ENCODE measurements at regions of chr15 and their contacts with region 1.

Region 1: DNA sequence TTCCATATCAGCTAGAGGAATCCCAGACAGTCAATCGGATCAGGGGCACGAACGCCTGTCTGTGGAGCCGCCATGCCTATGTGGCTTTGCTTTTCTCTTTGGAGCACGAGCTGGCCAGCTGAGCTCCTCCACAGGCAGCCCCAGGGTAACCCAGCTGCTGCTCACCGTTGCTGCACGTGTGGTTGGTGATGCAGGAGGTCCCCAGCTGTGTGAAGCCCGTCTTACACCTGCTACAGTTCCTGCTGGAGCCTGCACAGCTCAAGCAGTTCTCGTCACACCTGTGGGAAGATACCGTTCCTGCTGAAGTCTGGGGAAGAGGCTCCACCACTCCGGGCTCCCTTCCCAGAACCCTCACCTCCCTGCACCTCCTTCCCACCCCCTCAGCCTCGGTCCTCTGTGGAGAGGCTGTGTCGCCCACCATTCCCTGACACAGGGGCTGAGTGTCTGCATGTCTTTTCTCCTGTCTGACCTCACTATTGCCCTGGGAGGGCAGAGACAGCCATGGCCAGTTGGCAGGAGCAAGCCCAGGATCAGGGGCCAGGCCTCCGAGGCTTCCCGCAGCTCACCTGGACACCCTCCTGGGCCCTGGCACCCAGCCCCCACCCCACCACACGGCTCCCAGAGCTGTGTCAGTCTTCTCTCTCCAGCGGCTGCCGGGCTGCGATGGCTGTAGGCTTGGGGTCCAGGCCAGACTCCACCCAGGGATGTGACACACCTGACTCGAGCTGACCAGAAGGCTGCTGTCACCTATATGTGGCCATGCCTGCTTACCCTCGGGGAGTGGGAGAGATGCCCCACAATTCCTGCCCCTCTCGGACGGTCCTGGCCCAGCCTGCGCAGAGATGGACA is 12.2 kb upstream of the SNRPA1 start:
- DNase-seq: no peak
- H3K4me3 ChIP-seq: no peak overlapping the region
- H3K27ac ChIP-seq: no peak overlapping the region
- H3K4me1 ChIP-seq: no peaks in the 10 kb centered on the region
- H3K27me3 ChIP-seq: no peaks in the 10 kb centered on the region
- CTCF ChIP-seq: no peak

Region 2: DNA sequence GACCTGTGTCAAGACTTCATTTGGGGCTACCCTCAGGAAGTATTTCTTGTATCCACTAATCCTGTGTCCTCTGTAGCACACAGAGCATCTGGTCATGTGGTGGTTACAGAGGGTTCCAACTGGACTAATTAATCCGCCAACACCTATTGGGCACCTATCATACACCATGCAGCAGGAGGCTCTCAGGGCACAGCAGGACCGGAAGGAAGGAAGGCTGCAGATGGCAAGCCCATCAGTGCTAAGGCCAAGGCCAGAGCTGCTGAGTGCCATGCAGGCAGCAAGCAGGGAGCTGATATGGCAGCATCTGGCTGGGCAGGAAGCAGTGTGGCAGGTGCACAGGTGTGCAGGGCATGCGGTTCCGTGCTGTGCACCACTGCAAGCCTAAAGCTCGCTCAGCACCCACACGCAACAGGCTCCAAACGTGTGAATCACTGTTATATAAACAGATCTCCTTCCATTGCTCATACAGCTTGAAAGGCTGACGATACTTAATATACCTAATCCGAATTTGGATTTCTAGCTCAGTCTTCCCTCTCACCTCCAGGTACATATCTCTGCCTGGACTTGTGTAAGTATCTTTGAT is 52.2 kb after region 1 on chr15:
- intact Hi-C with region 1: no loop called
- DNase-seq: no peak
- H3K4me3 ChIP-seq: no peak overlapping the region
- H3K27ac ChIP-seq: no peak overlapping the region
- H3K4me1 ChIP-seq: no peaks in the 10 kb centered on the region
- H3K27me3 ChIP-seq: no peaks in the 10 kb centered on the region
- CTCF ChIP-seq: no peak

Region 3: GRCh38 chr15:101489633-101490407 is 182.5 kb after region 1 on chr15 and contains the start of gene PCSK6:
- intact Hi-C with region 1: loop called (anchors 5 kb)
- DNase-seq: peak; percentile 52
- H3K4me3 ChIP-seq: peak within 1 kb of the TSS; percentile 47
- H3K27ac ChIP-seq: no peak within 1 kb of the TSS
- H3K4me1 ChIP-seq: no peaks in the 10 kb centered on the region
- H3K27me3 ChIP-seq: no peaks in the 10 kb centered on the region
- CTCF ChIP-seq: no peak
- total RNA-seq, gene PCSK6: 29.9 to 39.5 TPM

Region 4: DNA sequence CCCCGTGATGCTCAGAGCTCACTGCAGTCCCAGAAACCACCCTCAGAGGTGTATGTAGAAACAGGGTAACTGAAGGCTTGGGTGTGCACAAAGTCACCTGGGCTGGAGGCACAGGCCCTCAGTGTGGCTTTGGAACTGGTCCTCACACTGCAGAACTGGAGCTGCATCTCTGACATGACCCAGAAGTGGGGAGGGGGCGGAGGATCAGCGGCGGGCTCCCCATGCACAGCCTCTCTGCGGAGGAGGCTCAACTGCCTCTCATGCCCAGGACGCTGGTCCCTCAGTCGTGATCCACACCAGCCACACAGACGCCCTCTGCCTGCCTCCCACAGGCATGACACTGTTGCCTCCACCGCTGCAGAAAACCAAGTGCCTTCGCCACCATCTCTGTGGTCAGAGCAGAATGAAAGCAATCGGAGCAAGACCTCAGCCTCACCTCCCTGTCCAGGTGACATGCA is 271.2 kb after region 1 on chr15:
- intact Hi-C with region 1: loop called (anchors 5 kb)
- DNase-seq: peak; percentile 63
- H3K4me3 ChIP-seq: no peak overlapping the region
- H3K27ac ChIP-seq: no peak overlapping the region
- H3K4me1 ChIP-seq: no peaks in the 10 kb centered on the region
- H3K27me3 ChIP-seq: no peaks in the 10 kb centered on the region
- CTCF ChIP-seq: peak; percentile 58

Region 5: DNA sequence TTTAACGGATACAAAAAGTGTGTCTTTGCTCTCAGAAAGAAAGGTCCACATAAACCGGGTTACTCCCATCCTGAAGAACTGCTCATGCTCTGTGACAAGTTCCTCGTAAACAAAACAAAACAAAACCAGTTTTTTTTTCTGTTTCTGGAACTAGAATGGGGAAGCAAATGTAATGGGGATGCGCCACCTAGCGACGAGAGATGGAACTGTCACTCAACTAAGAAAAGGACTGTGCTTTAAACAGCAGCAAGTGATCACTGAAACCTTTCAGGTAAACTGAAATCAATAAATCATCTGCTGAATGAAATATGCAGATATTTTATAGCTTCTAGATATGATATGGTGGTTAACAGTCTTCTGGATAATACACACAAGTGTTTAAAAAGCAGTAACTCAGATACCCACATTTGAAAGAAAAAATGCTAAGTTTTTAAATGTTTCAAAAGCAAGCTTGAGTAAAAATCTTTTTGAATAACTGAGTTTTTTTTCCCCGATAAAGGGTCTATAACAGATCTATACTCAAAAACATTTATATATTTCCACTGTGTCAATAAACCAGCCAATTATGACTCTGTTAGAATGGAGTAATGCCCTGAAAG is 334.0 kb after region 1 on chr15:
- intact Hi-C with region 1: loop called (anchors 5 kb)
- DNase-seq: peak; percentile 82
- H3K4me3 ChIP-seq: no peak overlapping the region
- H3K27ac ChIP-seq: peak overlapping the region; percentile 52
- H3K4me1 ChIP-seq: peaks cover 8% of the 10 kb centered on the region
- H3K27me3 ChIP-seq: no peaks in the 10 kb centered on the region
- CTCF ChIP-seq: peak; percentile 97